Head of caudate nucleus (tissue), 42 donors: ENCODE measurements at regions of chr19 and their contacts with region 1.

Region 1: DNA sequence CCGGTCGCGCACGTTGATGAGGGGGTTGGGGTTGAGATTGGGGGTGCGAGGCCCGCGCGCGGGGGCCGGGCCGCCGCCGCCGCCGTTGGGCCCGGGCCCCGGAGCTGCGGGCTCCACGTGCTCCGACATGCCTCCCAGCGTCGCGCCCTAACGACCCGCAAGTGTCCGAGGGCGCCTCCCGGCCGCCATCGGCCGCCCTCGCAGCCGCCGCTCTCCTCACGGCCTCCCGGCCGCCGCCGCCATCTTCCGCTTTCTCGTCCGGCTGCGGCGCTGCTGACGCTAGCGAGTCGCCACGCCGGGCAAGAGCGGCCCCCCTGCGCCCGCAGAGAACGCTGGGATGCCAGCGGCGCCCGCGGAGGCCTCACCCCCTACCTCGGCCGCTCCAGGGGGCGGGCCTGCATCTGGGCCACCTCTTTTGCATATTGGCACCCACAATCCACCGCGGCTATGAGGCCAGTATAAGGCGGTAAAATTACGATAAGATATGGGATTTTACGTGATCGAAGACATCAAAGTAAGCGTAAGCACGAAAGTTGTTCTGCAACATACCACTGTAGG is at the start of gene TMEM259:
- DNase-seq: peak; percentile 96 to 99 (median 98)

Region 2: GRCh38 chr19:984165-984967 is 36.6 kb before region 1 on chr19 and contains the start of gene WDR18:
- intact Hi-C with region 1: loop called (anchors 1 kb)
- DNase-seq: peak; percentile 90 to 99 (median 96)

Region 3: GRCh38 chr19:1183534-1184172 is 162.7 kb after region 1 on chr19:
- intact Hi-C with region 1: loop called (anchors 10 kb)
- DNase-seq: no peak